CD4-positive, alpha-beta T cell (primary cell): ENCODE measurements at regions of chr17 and their contacts with region 1.

Region 1: DNA sequence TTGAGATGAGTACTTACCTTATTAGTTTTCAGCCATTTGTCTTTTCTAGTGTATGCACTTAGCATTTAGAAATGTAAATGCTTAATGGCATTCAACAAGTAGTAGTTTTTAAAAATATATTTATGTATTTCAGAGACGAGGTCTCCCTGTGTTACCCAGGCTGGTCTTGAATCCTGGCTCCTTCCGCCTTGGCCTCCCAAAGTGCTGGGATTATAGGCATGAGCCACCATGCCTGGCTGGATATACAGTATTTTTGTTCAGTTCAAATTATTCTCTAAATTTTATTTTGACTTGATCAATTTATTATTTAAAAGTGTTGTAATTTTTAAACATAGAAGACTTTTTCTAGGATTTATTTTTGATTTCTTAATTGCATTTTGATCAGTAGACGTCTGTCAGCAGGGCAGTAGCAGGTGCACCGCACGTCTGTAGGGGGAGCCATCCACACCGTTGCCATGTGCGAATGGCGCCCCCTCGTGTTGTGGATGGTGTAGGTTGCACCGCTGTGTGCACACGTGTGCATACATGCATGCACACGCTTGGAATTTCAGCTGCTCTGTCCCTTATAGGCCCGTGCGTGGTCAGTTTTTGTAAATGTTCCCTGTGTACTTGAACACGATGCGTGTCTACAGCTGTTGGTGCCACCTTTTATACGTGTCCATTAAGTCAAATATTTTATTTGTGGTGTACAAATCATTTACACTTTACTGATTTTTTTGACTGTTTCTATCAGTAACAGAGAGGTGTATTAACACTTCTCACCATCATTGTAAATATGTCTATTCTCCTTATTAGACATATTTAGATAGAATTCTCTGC is 30.6 kb downstream of the RPTOR start:
- DNase-seq: peak; percentile 85 to 97 (median 90)
- ATAC-seq: peak; percentile 100
- H3K4me3 ChIP-seq: no peak overlapping the region
- H3K4me3 Mint-ChIP-seq: no peak overlapping the region
- H3K27ac ChIP-seq: no peak overlapping the region
- H3K27ac Mint-ChIP-seq: no peak overlapping the region
- H3K4me1 ChIP-seq: no peaks in the 10 kb centered on the region
- H3K4me1 Mint-ChIP-seq: peaks cover 25% of the 10 kb centered on the region
- H3K27me3 ChIP-seq: no peaks in the 10 kb centered on the region
- H3K27me3 Mint-ChIP-seq: no peaks in the 10 kb centered on the region
- CTCF ChIP-seq: peak; percentile 100

Region 2: DNA sequence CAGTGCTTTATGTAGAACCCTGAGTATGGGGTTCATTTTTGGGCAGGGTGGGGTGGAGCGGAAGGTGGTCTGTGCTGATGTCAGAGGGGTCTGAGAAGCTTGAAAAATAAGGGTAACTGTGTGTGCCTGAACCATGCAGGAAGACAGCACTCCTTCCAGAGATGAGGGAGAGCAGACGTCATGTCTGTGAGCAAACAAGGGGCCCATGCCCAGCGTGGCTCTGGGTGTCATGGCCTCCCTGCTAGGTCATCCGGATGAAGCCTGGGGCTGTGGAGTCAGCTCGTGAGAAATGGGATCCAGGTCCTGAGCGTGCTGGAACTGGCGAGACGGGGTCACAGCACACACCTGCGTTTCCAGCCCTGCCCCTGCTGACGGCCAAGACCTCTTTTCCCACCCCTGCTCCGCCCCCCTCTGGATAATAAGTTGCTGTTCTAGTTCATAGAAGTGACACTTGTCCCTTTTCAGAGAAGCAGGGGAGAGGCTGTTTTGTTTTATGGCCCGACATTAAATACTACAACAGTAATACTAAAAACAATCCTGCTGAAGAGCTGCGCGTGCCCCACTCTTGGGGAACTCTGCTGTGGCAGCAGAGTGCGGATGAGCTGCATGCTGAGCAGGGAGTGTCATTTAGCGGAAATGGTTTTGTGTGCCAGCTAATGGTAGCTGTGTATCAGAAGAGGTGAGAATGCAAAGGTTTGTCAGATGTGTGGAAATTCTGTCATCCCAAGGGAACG is 61.9 kb after region 1 on chr17:
- CTCF ChIA-PET with region 1: interaction called, 11 read pairs
- POLR2A ChIA-PET with region 1: no interaction called
- intact Hi-C with region 1: no loop called
- DNase-seq: peak in 1 of 14 experiments; percentile 32
- ATAC-seq: no peak
- H3K4me3 ChIP-seq: no peak overlapping the region
- H3K4me3 Mint-ChIP-seq: no peak overlapping the region
- H3K27ac ChIP-seq: no peak overlapping the region
- H3K27ac Mint-ChIP-seq: no peak overlapping the region
- H3K4me1 ChIP-seq: peaks cover 4% of the 10 kb centered on the region
- H3K4me1 Mint-ChIP-seq: peaks cover 24% of the 10 kb centered on the region
- H3K27me3 ChIP-seq: no peaks in the 10 kb centered on the region
- H3K27me3 Mint-ChIP-seq: no peaks in the 10 kb centered on the region
- CTCF ChIP-seq: no peak

Region 3: GRCh38 chr17:80845069-80845862 is 270.0 kb after region 1 on chr17:
- CTCF ChIA-PET with region 1: no interaction called
- POLR2A ChIA-PET with region 1: no interaction called
- intact Hi-C with region 1: no loop called
- DNase-seq: peak in 1 of 14 experiments; percentile 32
- ATAC-seq: no peak
- H3K4me3 ChIP-seq: no peak overlapping the region
- H3K4me3 Mint-ChIP-seq: no peak overlapping the region
- H3K27ac ChIP-seq: peak overlapping the region in 1 of 2 donors; percentile 11
- H3K27ac Mint-ChIP-seq: peak overlapping the region; percentile 69
- H3K4me1 ChIP-seq: peaks cover 37% of the 10 kb centered on the region
- H3K4me1 Mint-ChIP-seq: peaks cover 47% of the 10 kb centered on the region
- H3K27me3 ChIP-seq: no peaks in the 10 kb centered on the region
- H3K27me3 Mint-ChIP-seq: no peaks in the 10 kb centered on the region
- CTCF ChIP-seq: no peak

Region 4: DNA sequence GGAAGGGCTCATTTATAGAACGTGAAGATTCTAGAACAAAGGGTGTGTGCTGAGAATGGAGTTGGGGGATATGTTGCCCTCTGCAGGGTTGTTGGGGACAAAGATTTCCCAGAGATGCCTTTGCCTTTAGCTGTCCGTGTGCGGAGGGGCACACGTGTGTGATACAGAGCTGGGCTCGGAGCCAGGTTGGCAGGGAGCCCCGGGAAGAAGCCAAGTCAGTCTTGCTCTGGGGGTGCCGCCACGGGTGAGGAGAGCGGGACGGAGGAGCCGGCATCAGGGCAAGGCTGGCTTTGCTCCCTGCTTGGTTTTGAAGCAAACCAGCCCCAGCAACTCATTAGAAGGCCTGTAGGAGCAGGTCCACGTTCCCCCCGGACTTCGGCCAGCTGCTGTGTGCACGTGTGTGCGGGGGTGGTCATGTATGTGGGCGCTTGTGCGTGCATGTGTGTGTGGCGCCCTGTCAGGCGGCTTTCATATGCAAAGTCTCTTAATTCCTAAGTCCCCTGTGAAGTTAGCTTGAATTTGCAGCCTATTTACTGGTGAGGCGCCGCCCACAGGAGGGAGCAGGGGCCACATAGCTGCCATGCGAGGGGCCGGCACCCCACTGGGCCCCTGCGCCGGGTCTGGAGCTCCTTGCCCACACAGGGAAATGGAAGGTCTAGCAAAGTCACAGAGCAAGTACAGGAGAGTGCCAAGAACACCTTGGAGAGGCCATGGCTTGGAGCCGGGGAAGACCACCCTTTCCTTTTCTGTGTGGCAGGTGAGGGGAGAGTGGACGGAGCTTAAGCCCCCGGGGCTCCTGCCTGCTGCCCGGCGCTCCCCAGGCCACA is 284.3 kb after region 1 on chr17:
- CTCF ChIA-PET with region 1: no interaction called
- POLR2A ChIA-PET with region 1: no interaction called
- intact Hi-C with region 1: no loop called
- DNase-seq: no peak
- ATAC-seq: no peak
- H3K4me3 ChIP-seq: no peak overlapping the region
- H3K4me3 Mint-ChIP-seq: no peak overlapping the region
- H3K27ac ChIP-seq: no peak overlapping the region
- H3K27ac Mint-ChIP-seq: no peak overlapping the region
- H3K4me1 ChIP-seq: peaks cover 52% of the 10 kb centered on the region
- H3K4me1 Mint-ChIP-seq: peaks cover 44% of the 10 kb centered on the region
- H3K27me3 ChIP-seq: no peaks in the 10 kb centered on the region
- H3K27me3 Mint-ChIP-seq: no peaks in the 10 kb centered on the region
- CTCF ChIP-seq: no peak

Region 5: DNA sequence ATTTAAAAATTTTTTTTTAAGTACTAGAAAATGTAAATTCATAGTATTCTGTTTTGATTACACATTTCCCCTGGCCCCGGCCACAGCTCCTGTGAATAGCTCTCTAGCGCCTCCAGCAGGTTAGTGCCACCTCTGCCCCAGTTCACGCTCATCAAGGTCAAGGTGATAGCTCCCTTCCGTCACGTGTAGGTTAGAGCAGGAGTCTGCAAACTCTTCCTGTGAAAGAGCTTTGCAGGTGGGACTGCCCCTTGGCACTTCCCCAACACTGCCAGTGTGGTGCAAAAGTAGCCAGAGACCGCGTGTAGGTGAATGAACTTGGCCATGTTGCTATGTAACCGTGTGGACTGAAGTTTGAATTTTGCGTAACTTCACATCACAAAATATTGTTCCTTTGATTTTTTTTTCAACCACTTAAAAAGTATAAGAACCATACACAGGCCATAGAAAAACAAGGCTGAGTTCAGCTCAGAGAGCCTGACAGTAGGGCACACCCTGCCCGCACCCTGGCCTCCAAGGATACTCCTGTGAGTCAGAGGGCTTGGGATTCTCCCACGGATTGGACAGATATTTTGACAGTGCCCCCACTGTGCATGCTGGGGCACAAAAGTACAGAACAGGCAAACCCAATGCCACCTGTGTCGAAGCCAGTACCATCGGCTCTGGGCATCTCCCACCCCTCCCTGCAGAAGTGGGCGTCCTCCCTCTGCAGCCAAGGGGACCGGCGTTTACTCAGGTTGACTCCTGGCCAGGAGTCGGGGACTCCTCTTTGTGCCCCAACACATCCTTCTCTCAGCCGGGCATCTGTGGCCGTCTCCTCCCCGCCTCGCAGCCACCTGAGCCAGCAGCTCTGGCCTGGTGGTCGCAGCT is 324.4 kb after region 1 on chr17:
- CTCF ChIA-PET with region 1: interaction called, 6 read pairs
- POLR2A ChIA-PET with region 1: no interaction called
- intact Hi-C with region 1: loop called (anchors 1 to 2 kb)
- DNase-seq: peak; percentile 70 to 89 (median 78)
- ATAC-seq: peak; percentile 95
- H3K4me3 ChIP-seq: no peak overlapping the region
- H3K4me3 Mint-ChIP-seq: no peak overlapping the region
- H3K27ac ChIP-seq: no peak overlapping the region
- H3K27ac Mint-ChIP-seq: peak overlapping the region; percentile 47
- H3K4me1 ChIP-seq: peaks cover 22% of the 10 kb centered on the region
- H3K4me1 Mint-ChIP-seq: peaks cover 30% of the 10 kb centered on the region
- H3K27me3 ChIP-seq: no peaks in the 10 kb centered on the region
- H3K27me3 Mint-ChIP-seq: no peaks in the 10 kb centered on the region
- CTCF ChIP-seq: peak; percentile 87

Region 6: DNA sequence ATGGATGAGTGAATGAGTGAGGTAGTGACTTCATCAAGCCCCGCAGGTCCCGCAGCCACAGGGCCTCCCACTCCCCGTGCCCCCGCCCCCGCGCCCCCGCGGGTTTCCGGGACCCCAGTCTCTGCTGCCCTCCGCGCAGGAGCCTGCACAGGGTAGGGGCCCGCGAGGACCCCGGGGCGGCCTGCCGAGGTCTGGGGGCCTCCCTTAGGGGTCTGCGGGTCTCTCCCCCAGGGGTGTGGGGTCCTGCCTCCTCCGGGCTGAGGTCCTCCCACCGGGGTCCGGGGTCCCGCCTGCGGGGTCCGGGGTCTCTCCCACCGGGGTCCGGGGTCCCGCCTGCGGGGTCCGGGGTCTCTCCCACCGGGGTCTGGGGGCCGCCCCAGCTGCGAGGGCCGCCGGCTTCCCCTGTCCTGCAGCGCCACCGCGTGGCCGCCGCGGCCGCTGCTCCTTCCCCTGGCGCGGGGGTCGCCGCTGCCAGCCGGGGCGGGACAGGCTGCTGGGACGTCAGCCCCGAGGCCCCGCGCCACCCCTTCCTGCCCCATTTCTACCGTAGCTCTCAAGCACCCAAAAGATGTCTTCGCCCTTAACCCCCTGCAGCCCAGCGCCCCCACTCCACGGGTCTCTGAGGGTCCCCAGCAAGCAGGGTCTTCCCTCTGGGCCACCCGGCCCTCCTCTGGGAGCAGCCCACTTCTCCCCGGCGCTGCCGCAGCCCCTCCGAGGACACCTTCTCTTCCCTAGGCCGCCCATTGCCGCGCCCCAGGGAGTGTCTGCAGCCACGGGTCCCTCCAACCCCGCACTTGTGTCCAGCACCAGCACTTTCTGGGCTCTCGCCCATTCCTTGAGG is 406.0 kb after region 1 on chr17:
- CTCF ChIA-PET with region 1: no interaction called
- POLR2A ChIA-PET with region 1: no interaction called
- intact Hi-C with region 1: loop called in 1 of 2 experiments (anchors 1 kb)
- DNase-seq: peak in 10 of 14 experiments; percentile 14 to 75 (median 38)
- ATAC-seq: peak; percentile 78
- H3K4me3 ChIP-seq: no peak overlapping the region
- H3K4me3 Mint-ChIP-seq: no peak overlapping the region
- H3K27ac ChIP-seq: no peak overlapping the region
- H3K27ac Mint-ChIP-seq: no peak overlapping the region
- H3K4me1 ChIP-seq: peaks cover 8% of the 10 kb centered on the region
- H3K4me1 Mint-ChIP-seq: peaks cover 8% of the 10 kb centered on the region
- H3K27me3 ChIP-seq: peaks cover 0 to 15% of the 10 kb centered on the region in 2 experiments
- H3K27me3 Mint-ChIP-seq: peaks cover 30% of the 10 kb centered on the region
- CTCF ChIP-seq: peak; percentile 72